Activated naive CD4-positive, alpha-beta T cell treated with anti-CD3 and anti-CD28 coated beads for 36 hours (primary cell): ENCODE measurements at regions of chr11 and their contacts with region 1.

Region 1: DNA sequence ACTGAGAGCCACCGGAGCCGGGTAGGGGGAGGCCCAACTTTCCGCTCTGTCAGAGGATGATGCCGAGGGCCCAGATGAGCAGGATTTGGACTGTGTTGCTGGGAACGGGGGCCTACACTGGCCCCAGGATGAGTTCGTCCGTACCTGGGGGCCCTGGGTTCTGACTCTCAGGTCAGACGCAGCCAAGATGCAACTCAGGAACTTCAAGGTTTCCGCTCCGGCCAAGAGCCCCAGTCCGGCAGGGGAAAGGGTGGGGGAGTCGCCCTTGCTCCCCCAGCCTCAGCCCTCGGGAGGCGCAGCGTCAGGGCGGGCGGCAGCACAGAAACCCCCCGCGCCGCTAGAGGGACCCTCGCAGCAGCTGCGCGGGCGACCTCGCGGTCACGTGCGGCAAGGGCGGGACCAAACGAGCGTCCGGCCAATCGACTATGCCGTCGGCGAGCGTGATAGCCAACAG is 241 bp upstream of the ARL2 start:
- DNase-seq: peak; percentile 87
- H3K4me3 Mint-ChIP-seq: peak overlapping the region; percentile 85
- H3K27ac Mint-ChIP-seq: peak overlapping the region; percentile 96
- H3K4me1 Mint-ChIP-seq: peaks cover 27% of the 10 kb centered on the region
- H3K27me3 Mint-ChIP-seq: no peaks in the 10 kb centered on the region

Region 2: DNA sequence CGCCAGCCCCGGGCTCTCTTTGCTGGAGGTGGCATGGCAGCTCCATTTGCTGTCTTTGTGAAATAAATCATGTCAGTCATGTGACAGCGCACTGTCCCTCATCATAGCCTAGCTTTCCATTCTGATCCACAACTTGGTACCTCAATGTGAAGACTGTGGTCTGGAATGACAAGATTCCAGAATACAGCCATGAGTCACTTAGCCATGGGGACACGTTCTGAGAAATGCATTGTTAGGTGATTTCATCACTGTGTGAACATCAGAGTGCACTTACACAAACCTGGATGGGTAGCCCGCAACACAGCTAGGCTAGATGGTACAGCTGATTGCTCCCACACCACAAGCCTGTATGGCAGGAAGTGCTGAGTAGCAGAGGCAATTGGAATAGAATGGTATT is 627.4 kb before region 1 on chr11:
- CTCF ChIA-PET with region 1: no interaction called
- intact Hi-C with region 1: no loop called
- DNase-seq: no peak
- H3K4me3 Mint-ChIP-seq: no peak overlapping the region
- H3K27ac Mint-ChIP-seq: no peak overlapping the region
- H3K4me1 Mint-ChIP-seq: peaks cover 8% of the 10 kb centered on the region
- H3K27me3 Mint-ChIP-seq: no peaks in the 10 kb centered on the region

Region 3: GRCh38 chr11:64846998-64847666 is 166.6 kb before region 1 on chr11:
- CTCF ChIA-PET with region 1: interaction called, 12 read pairs
- intact Hi-C with region 1: loop called (anchors 1 kb)
- DNase-seq: peak; percentile 96
- H3K4me3 Mint-ChIP-seq: no peak overlapping the region
- H3K27ac Mint-ChIP-seq: no peak overlapping the region
- H3K4me1 Mint-ChIP-seq: peaks cover 57% of the 10 kb centered on the region
- H3K27me3 Mint-ChIP-seq: no peaks in the 10 kb centered on the region

Region 4: GRCh38 chr11:64924102-64924851 is 89.4 kb before region 1 on chr11 and contains the start of gene PPP2R5B:
- CTCF ChIA-PET with region 1: no interaction called
- intact Hi-C with region 1: loop called (anchors 1 kb)
- DNase-seq: peak; percentile 92
- H3K4me3 Mint-ChIP-seq: peak within 1 kb of the TSS; percentile 87
- H3K27ac Mint-ChIP-seq: peak within 1 kb of the TSS; percentile 93
- H3K4me1 Mint-ChIP-seq: peaks cover 19% of the 10 kb centered on the region
- H3K27me3 Mint-ChIP-seq: no peaks in the 10 kb centered on the region
- total RNA-seq, gene PPP2R5B: 3.3 to 4.6 TPM

Region 5: DNA sequence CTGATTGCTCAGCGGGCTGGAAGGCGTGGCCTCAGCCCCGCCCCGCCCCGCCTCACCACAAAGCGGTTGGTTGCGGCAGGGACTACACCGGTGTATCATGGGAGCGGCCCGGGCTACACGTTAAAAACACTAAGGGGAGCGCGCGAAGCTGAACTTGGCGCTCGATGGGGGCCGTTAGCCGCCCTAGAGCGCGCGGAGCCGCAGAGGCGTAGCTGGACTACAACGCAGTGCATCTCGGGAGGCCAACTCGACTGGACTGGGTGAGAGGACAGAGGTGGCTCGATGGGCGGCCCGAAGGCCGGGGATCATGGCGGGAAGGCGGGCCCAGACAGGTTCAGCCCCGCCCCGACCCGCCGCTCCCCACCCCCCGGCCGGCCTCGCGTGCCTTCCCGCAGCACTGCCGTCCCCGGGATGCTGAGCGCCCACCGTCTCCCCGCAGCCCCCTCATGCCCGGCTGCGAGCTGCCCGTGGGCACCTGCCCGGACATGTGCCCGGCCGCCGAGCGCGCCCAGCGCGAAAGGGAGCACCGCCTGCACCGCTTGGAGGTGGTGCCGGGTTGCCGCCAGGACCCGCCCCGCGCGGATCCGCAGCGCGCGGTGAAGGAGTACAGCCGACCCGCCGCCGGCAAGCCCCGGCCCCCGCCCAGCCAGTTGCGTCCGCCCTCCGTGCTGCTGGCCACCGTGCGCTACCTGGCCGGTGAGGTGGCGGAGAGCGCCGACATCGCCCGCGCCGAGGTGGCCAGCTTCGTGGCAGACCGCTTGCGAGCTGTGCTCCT is 27.3 kb after region 1 on chr11 and contains the start of gene SAC3D1:
- CTCF ChIA-PET with region 1: interaction called, 6 read pairs
- intact Hi-C with region 1: loop called (anchors 1 kb)
- DNase-seq: peak; percentile 94
- H3K4me3 Mint-ChIP-seq: peak within 1 kb of the TSS; percentile 92
- H3K27ac Mint-ChIP-seq: peak within 1 kb of the TSS; percentile 98
- H3K4me1 Mint-ChIP-seq: peaks cover 19% of the 10 kb centered on the region
- H3K27me3 Mint-ChIP-seq: no peaks in the 10 kb centered on the region
- total RNA-seq, gene SAC3D1: 19.2 to 20.3 TPM

Region 6: GRCh38 chr11:65117216-65118096 is 103.7 kb after region 1 on chr11 and contains the start of gene ZNHIT2:
- CTCF ChIA-PET with region 1: interaction called, 7 read pairs
- intact Hi-C with region 1: loop called (anchors 1 kb)
- DNase-seq: peak; percentile 100
- H3K4me3 Mint-ChIP-seq: peak within 1 kb of the TSS; percentile 87
- H3K27ac Mint-ChIP-seq: peak within 1 kb of the TSS; percentile 87
- H3K4me1 Mint-ChIP-seq: peaks cover 66% of the 10 kb centered on the region
- H3K27me3 Mint-ChIP-seq: no peaks in the 10 kb centered on the region
- total RNA-seq, gene ZNHIT2: 5.6 to 6.1 TPM

Region 7: DNA sequence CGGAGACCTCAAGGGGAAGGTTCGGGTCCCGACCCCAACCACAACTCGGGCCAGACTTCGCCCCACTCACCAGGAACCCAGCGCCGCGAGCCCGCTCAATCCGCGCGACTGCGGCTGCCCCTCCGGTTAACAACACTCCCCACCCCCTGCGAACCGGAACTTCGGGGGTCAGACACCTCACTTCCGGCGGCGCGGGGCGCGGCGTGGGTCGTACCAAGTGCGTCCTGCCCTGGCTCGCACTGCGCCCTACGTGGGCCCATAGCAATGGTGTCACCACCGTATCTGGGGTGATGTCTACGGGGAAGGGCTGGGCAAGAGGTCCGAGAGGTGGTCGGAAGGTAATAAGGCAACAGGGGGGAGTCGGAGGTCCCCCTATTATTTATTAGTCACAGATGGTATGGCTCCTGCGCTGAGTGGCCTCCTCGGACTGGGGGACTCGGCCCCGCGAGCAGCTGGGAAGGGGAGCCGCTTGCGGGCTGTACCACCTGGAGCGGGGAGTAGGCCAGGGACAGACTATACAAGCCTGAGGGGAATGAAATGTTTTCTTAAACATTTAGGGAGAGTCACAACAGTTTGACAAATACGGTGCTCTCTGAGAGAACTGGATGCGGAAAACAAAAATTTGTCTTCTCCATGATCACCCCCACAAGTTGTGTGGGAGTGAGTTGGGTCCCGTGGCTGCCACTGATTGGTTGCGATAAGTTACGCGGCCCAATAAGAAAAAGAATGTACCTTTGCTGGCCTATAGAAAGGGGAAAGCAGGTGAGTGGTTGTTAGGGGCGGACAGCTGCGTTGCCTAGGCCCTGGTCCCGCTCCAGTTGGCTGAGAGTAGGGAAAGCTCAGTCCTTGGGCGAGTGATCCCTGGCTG is 120.9 kb after region 1 on chr11 and contains the start of gene SYVN1:
- CTCF ChIA-PET with region 1: no interaction called
- intact Hi-C with region 1: no loop called
- DNase-seq: peak; percentile 92
- H3K4me3 Mint-ChIP-seq: peak within 1 kb of the TSS; percentile 99
- H3K27ac Mint-ChIP-seq: peak within 1 kb of the TSS; percentile 100
- H3K4me1 Mint-ChIP-seq: peaks cover 29% of the 10 kb centered on the region
- H3K27me3 Mint-ChIP-seq: no peaks in the 10 kb centered on the region
- total RNA-seq, gene SYVN1: 19.0 to 19.2 TPM

Region 8: GRCh38 chr11:65329944-65330403 is 316.3 kb after region 1 on chr11:
- CTCF ChIA-PET with region 1: no interaction called
- intact Hi-C with region 1: loop called (anchors 2 kb)
- DNase-seq: peak; percentile 96
- H3K4me3 Mint-ChIP-seq: no peak overlapping the region
- H3K27ac Mint-ChIP-seq: no peak overlapping the region
- H3K4me1 Mint-ChIP-seq: peaks cover 11% of the 10 kb centered on the region
- H3K27me3 Mint-ChIP-seq: no peaks in the 10 kb centered on the region

Region 9: DNA sequence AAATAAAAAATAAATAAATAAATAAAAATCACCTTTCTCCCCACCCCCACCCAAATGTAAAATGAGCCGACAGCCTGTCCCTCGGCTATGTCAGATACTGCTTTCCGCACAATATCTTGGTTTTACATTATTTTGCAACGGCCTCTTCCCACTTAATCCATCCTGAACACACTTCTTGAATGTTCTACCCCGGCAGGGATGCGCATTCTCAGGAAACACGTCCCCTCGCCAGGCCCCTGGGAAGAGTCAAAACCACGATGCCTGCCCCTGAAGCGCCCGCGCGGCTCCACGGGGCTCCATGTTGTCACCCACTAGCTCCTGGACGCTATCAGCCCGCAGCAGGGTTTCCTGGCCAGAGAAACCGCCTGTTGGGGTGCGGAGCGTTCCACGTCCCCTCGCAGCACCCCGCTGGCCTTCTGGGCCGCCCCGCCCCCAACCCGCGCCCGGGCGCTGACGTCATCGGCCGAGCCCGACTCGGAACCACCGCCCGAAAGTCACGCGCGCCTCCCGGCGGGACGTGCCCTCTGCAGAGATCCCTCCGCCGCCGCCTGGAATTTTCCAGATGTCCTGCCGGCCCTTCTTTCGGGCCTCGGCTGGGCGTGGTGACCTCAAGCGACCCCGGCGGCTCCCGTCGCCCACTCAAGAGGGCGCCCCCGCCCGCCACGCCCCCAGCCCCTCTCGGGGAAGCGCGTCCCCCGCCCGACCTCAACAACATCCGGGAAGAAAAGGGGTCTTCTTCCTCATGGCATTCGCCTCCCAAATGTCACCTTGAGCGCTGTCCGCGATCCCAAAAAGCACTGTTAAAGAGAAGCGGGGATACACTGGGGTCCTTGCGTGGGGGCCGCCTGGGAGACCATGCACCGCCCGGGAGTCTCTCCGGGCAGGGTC is 408.3 kb after region 1 on chr11:
- CTCF ChIA-PET with region 1: no interaction called
- intact Hi-C with region 1: no loop called
- DNase-seq: peak; percentile 97
- H3K4me3 Mint-ChIP-seq: peak overlapping the region; percentile 100
- H3K27ac Mint-ChIP-seq: peak overlapping the region; percentile 99
- H3K4me1 Mint-ChIP-seq: peaks cover 40% of the 10 kb centered on the region
- H3K27me3 Mint-ChIP-seq: peaks cover 14% of the 10 kb centered on the region